Dorsolateral prefrontal cortex (tissue), 120 donors: ENCODE measurements at regions of chr3 and their contacts with region 1.

Region 1: GRCh38 chr3:189947948-189948723 is 172.6 kb downstream of the P3H2 start:
- DNase-seq: no peak
- H3K4me3 ChIP-seq: no peak overlapping the region
- H3K27ac ChIP-seq: no peak overlapping the region
- H3K27me3 ChIP-seq: peaks cover 0 to 20% (median 0%) of the 10 kb centered on the region in 45 donors
- CTCF ChIP-seq: peak in 42 of 56 donors; percentile 9 to 60 (median 30)

Region 2: GRCh38 chr3:189270248-189270832 is 677.8 kb before region 1 on chr3:
- intact Hi-C with region 1: loop called in 1 of 2 experiments (anchors 10 kb)
- DNase-seq: peak in 9 of 10 donors; percentile 22 to 62 (median 51)
- H3K4me3 ChIP-seq: no peak overlapping the region
- H3K27ac ChIP-seq: no peak overlapping the region
- H3K27me3 ChIP-seq: peaks cover 0 to 8% (median 0%) of the 10 kb centered on the region in 45 donors
- CTCF ChIP-seq: peak in 47 of 56 donors; percentile 8 to 57 (median 36)